Heart left ventricle (tissue), 16 donors: ENCODE measurements at regions of chr4 and their contacts with region 1.

Region 1: DNA sequence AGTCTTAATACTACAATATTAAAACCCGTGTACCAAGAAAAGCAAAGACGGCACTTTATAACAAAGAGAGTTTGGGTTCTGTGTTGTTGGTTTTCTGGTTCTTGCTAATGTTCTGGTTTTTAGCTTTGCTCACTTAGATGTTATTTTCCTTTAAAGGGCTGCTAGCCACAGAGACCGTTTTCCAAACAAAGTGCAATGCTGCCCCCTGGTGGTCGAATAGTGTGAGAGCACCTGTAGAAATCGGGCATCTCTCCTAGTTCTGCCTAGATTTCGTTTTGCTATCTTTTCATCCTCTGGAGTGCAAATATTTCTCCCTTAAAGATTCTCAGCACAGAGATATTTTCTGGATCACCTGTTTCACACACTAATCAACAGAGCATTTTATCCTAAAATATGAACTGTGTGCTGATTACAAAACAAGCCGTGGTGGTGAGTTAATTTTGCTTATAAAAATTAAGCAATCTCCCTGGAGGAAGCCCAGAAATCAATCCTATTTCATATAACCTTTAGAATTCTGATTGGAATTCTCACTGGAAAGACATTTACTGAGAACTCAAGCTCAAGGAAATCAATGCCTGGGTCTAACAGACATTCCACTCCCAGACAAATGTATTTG is 334.5 kb upstream of the NOCT start:
- DNase-seq: peak; percentile 69 to 83 (median 76)
- ATAC-seq: peak in 3 of 4 donors; percentile 62 to 70 (median 63)
- H3K4me3 ChIP-seq: no peak overlapping the region
- H3K27ac ChIP-seq: no peak overlapping the region
- H3K4me1 ChIP-seq: peaks cover 0 to 16% (median 0%) of the 10 kb centered on the region in 12 donors
- H3K27me3 ChIP-seq: peaks cover 0 to 4% (median 0%) of the 10 kb centered on the region in 9 donors
- CTCF ChIP-seq: peak; percentile 85 to 99 (median 93)
- POLR2A ChIP-seq: no peak

Region 2: GRCh38 chr4:137819964-137820383 is 861.1 kb before region 1 on chr4:
- intact Hi-C with region 1: loop called in 3 of 10 experiments (anchors 5 kb)
- DNase-seq: no peak
- ATAC-seq: peak in 3 of 4 donors; percentile 45 to 69 (median 49)
- H3K4me3 ChIP-seq: no peak overlapping the region
- H3K27ac ChIP-seq: no peak overlapping the region
- H3K4me1 ChIP-seq: no peaks in the 10 kb centered on the region
- H3K27me3 ChIP-seq: no peaks in the 10 kb centered on the region
- CTCF ChIP-seq: peak in 9 of 12 donors; percentile 14 to 42 (median 23)
- POLR2A ChIP-seq: no peak

Region 3: DNA sequence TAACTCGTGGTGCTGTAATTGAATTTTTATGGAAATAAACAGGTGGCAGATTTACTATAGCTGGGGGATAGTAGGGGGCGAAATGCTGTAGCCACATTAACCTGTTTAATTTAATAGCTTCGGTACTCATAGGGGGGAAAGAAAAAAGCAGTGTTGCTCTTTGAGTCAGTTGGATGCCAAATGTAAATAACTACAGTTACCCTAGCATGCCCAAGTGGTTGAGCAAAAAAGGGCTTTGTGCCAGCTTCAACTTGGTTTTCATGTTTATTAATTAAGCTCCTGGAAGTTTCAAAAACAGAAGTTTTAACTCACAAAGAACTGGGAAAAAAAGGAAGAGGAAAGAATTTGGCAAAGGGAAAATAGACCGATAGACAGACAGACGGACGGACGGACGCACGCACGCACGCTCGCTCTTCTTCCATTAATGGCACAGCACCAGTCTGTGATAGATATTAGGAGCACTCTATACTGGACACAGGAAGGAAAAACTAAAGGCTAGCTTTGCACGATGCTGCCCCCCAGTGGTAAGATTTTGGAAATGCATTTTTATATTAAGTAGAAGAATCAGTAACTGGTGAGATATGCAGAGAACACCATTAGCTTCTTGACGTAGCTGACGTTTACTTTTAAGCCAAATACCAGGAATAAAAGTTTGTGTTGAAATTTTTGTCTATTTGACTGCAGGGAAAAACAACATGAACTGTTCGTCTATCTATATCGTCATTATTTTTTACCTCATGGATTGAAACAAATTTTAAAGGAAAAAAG is 590.8 kb before region 1 on chr4:
- intact Hi-C with region 1: loop called in 5 of 10 experiments (anchors 2 to 5 kb)
- DNase-seq: peak in 2 of 5 donors; percentile 42 to 43
- ATAC-seq: peak in 3 of 4 donors; percentile 74 to 86 (median 74)
- H3K4me3 ChIP-seq: peak overlapping the region in 3 of 12 donors; percentile 18 to 32 (median 28)
- H3K27ac ChIP-seq: no peak overlapping the region
- H3K4me1 ChIP-seq: peaks cover 0 to 14% (median 2%) of the 10 kb centered on the region in 12 donors
- H3K27me3 ChIP-seq: no peaks in the 10 kb centered on the region
- CTCF ChIP-seq: peak; percentile 69 to 89 (median 80)
- POLR2A ChIP-seq: no peak

Region 4: DNA sequence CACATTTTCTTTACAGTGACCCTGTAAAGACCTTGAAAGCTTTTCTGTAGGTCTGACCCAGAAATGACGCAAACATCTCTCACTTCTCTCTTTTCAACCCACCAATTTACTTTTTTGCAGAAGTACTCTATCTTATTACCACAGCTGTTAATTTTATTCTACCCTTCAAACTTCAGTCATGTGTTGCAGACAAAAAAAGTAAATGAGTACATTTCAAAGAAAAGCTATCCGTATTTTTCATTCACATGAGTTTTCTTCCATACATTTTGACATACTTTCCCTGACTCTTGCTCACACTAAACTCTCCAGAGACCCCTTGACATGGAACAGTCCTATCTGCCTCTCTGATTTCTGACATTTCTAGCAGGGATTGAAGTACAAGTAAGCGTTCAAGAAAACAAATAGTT is 490.6 kb before region 1 on chr4:
- intact Hi-C with region 1: loop called in 5 of 10 experiments (anchors 5 to 10 kb)
- DNase-seq: no peak
- ATAC-seq: no peak
- H3K4me3 ChIP-seq: no peak overlapping the region
- H3K27ac ChIP-seq: no peak overlapping the region
- H3K4me1 ChIP-seq: peaks cover 0 to 20% (median 0%) of the 10 kb centered on the region in 12 donors
- H3K27me3 ChIP-seq: no peaks in the 10 kb centered on the region
- CTCF ChIP-seq: no peak
- POLR2A ChIP-seq: no peak

Region 5: DNA sequence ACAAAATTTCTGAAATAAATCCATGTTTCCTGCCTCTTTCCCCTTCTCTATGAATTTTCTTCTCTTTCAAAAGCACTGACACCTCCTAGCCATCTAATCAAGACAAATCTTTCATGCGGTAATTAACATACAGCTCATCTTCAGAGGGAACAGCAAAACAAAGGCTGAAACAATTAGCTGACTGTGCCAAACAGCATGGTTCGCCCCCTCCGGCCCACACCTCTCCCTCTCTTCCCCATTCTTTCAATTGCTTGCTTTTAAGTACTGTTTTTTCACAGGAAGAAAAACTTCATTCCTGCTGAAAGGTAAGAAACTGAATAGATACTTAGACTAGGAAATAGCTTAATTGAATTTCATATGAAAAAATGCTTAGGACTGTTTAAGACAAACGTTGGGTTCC is 43.4 kb after region 1 on chr4:
- intact Hi-C with region 1: no loop called
- DNase-seq: no peak
- ATAC-seq: no peak
- H3K4me3 ChIP-seq: no peak overlapping the region
- H3K27ac ChIP-seq: no peak overlapping the region
- H3K4me1 ChIP-seq: no peaks in the 10 kb centered on the region
- H3K27me3 ChIP-seq: no peaks in the 10 kb centered on the region
- CTCF ChIP-seq: no peak
- POLR2A ChIP-seq: no peak

Region 6: DNA sequence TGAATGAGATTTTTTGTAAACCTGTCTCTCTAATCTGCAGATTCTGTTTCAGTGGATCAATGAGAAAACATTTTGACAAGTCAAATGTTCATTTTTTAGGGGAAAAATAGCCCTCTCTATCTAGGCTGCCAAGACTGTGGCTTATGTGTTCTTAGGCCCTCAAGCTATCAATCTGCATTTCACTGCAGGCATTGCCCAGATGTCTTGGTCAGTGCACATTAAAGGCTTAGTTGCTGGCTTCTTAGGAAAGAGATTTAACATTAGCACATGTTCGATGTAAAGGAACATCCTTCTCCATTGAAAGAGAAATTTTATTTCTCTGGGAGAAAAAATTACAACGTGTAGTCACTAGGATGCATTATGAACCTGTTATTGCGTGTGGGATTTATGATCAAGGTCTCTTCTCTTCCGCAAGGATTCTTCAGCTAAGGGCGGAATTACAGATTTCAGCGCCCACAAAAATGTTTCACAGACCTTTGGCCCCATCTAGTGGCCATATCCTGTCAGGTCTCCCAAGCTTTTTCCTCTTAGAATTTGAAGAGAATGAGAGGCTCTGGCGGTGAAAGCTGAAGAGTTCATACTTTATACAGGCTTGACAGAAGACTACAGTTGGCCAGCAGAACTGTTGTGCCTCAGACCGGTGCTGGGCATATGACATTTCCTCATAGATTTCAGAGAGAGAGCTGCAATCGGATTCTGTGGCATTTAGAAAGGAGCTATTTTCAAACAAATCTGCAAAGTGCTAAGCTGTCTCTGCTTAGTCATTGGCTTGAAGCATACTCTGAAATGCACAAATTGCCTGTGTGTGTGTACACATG is 189.8 kb after region 1 on chr4:
- intact Hi-C with region 1: loop called (anchors 5 to 10 kb)
- DNase-seq: peak in 4 of 5 donors; percentile 31 to 56 (median 41)
- ATAC-seq: peak in 3 of 4 donors; percentile 57 to 68 (median 68)
- H3K4me3 ChIP-seq: no peak overlapping the region
- H3K27ac ChIP-seq: no peak overlapping the region
- H3K4me1 ChIP-seq: peaks cover 0 to 8% (median 0%) of the 10 kb centered on the region in 12 donors
- H3K27me3 ChIP-seq: peaks cover 0 to 14% (median 0%) of the 10 kb centered on the region in 9 donors
- CTCF ChIP-seq: peak; percentile 73 to 91 (median 84)
- POLR2A ChIP-seq: no peak

Region 7: GRCh38 chr4:138919094-138919936 is 238.2 kb after region 1 on chr4:
- intact Hi-C with region 1: loop called in 4 of 10 experiments (anchors 5 to 10 kb)
- DNase-seq: peak; percentile 31 to 84 (median 57)
- ATAC-seq: peak; percentile 71 to 96 (median 88)
- H3K4me3 ChIP-seq: peak overlapping the region in 5 of 12 donors; percentile 11 to 24 (median 17)
- H3K27ac ChIP-seq: no peak overlapping the region
- H3K4me1 ChIP-seq: peaks cover 0 to 3% (median 0%) of the 10 kb centered on the region in 12 donors
- H3K27me3 ChIP-seq: no peaks in the 10 kb centered on the region
- CTCF ChIP-seq: peak in 11 of 12 donors; percentile 42 to 90 (median 76)
- POLR2A ChIP-seq: no peak